Transverse colon (tissue), 4 donors: ENCODE measurements at regions of chr4 and their contacts with region 1.

Region 1: GRCh38 chr4:86934771-86935565 is at the start of gene AFF1:
- DNase-seq: peak; percentile 96
- H3K4me3 ChIP-seq: peak within 1 kb of the TSS; percentile 81 to 97 (median 94)
- H3K27ac ChIP-seq: peak within 1 kb of the TSS; percentile 99 to 100 (median 99)
- H3K4me1 ChIP-seq: peaks cover 25 to 50% (median 43%) of the 10 kb centered on the region in 4 donors
- H3K27me3 ChIP-seq: no peaks in the 10 kb centered on the region
- CTCF ChIP-seq: peak; percentile 39 to 57 (median 44)
- EP300 ChIP-seq: no peak
- POLR2A ChIP-seq: peak; percentile 84
- total RNA-seq, gene AFF1: 77.1 to 151 (median 97.0) TPM

Region 2: GRCh38 chr4:87108142-87108546 is 173.2 kb after region 1 on chr4:
- in situ Hi-C with region 1: no loop called
- intact Hi-C with region 1: loop called (anchors 10 kb)
- DNase-seq: no peak
- H3K4me3 ChIP-seq: no peak overlapping the region
- H3K27ac ChIP-seq: peak overlapping the region; percentile 63 to 74 (median 70)
- H3K4me1 ChIP-seq: peaks cover 13 to 41% (median 27%) of the 10 kb centered on the region in 4 donors
- H3K27me3 ChIP-seq: no peaks in the 10 kb centered on the region
- CTCF ChIP-seq: no peak
- EP300 ChIP-seq: no peak
- POLR2A ChIP-seq: no peak